Posterior cingulate gyrus (tissue), 11 donors: ENCODE measurements at regions of chr19 and their contacts with region 1.

Region 1: DNA sequence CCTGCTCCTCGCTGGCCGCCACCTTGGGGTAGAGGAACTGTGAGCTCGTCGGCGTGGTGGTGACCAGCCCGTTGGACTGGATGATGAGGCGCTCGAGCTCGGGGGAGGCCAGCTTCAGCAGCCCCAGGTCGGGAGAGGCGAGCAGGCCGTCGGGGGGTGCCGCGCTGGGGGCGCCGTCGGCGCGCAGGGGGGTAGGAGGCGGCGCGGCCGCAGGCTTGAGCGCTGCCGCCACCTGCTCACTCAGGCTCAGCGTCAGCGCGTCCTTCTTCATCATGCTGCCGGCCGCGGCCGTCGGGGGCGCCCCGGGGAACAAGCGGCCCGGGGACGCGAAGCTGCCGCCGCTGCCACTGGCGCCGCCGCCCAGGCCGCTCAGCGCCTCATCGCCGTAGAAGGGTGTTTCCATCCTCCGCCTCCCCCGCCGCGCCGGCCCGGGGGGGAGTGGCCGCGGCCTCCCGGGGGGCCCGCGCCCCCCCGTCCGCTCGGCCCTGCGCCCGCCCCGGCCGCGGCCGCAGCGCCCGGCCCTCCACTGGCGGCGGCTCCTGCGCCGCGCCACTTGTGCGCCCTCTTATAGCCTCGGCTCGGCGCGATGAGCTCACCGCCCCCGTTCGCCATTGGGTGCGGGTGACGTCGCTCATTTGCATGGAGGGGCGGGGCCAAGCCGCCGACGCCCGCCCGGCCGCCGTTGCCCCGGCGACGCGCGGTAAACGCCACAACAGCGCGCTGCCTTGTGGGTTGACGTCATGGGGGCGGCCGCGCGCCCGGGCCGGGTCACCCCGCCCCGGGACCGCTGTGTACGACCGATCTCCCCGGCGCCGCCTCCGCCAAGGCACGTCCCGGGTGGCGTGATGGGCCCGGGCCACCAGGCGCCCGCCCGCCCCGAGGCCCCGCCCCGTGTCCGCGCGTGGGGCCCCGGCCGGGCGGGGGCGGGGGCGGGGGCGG is at the start of gene JUND:
- DNase-seq: peak; percentile 92 to 100 (median 96)

Region 2: DNA sequence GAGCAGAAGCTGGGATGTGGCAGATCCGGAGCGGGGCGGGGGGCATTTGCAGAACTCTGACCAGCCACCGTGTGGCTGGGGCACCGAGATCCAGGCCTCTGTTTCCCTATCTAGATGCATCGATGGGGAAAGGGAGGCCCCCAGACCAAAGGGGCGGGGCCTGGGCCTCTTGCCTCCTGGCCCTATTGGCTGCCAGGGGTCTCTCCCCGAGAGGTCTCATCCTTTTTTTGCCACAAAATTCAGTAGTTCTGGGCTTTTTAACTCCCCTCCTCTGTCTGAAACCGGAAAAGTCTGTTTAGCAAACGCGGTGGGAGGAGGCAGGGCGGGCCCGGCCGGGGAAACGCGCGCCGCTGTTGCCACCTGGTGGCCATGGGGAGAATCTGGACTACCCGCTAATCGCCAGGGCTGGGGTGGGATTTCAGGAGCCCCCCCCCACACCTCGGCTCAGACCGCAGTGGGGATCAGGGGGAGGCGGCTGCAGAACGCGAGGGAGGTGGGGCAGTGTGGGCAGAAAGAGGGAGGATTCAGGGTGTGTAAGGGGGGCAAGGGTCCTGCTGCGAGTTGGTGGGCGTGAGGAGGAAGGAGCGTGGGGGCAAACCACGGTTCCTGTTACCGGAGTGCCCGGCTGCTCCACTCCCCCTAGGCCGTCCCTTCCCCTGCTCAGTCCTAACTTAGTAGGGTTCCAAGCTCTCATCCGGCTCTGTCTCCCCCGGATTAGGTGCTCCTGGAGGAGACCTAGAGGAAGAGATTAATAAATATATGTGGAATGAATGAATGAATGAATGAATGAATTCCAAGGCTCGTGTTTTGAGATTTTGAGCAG is 222.9 kb before region 1 on chr19:
- intact Hi-C with region 1: no loop called
- DNase-seq: peak; percentile 70 to 98 (median 84)

Region 3: GRCh38 chr19:18203863-18204393 is 77.4 kb before region 1 on chr19 and contains the start of gene RAB3A:
- intact Hi-C with region 1: loop called (anchors 2 kb)
- DNase-seq: peak; percentile 100

Region 4: DNA sequence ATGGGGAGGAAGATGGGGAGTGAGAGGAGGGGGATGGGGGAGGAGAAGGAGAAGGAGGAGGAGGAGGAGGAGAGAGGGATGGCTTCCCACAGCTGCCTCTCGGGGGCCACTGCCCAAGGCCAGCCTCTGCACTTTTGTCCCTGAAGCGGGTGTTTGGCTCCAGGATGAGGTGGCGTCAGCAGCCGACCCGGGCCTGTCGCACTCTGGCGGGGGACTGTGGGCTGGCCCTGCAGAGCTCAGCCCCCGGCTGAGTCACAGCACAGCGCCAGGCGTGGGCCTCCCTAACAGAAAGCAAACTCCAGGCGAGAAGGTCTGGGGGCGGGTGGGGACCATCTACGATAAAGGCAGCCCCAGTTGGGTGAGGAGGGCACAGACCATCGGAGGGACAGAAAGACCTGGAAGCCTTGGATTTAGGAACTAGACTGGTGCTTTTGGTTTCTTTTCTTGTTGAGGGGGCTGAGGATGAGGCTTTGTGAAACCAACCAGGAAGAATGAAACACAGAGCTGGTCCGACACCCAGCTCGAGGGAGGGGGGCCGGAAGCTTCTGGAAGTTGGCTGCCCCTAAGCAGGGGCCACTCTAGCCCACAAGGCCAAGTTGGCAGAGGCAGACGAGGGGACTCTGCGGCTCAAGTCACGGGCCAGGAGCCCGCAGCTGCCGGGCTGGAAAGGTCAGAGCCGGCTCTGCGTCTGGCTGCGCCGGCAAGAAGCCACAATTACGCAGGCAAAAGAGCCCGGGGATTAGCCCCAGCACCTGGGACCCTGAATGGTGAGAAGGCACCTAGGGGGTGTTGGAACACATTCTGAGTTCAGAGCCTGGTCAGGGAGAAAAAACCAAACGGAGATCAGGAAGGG is 23.3 kb after region 1 on chr19:
- intact Hi-C with region 1: no loop called
- DNase-seq: peak; percentile 62 to 98 (median 78)

Region 5: DNA sequence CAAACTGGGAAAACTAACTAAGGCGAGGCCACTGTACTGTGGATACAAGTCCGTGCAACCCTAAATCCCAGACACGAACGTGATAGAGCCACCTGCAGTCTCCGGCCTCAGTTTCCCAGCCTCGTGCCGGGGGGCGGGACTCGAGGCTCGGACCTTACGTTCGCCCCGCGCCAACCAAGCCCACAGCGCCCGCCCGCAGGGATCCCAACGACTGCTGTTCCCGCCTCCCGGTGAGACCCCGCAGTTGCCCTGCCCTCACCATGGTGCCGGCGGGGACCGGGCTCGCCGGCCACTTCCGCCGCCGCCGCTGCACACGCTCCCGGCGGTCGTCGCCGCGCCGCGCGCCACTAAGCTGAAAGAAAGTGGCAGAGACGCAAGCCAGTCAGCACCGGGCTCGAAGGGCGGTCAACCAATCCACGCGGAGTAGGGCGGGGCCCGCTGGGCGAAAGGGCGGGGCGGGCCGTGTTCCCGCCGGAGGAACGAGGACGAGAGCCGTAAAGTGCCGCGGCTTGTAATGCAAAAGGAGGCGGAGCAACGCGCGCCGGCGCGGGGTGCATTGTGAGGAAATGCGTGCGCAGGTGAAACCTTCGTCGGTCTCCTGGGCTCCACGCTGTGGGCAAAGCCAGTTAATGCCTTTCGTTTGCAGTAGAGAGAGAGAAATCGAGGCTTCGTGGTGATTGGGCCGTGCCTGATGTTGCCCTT is 41.6 kb after region 1 on chr19 and contains the start of gene LSM4:
- intact Hi-C with region 1: loop called (anchors 1 kb)
- DNase-seq: peak; percentile 97 to 100 (median 98)

Region 6: GRCh38 chr19:18328340-18329034 is 47.1 kb after region 1 on chr19:
- intact Hi-C with region 1: loop called (anchors 1 kb)
- DNase-seq: peak; percentile 83 to 98 (median 92)

Region 7: GRCh38 chr19:18419195-18419698 is 137.9 kb after region 1 on chr19 and contains the start of gene SSBP4:
- intact Hi-C with region 1: loop called (anchors 10 kb)
- DNase-seq: peak in 9 of 10 donors; percentile 31 to 95 (median 66)